ENCODE measurements at regions of chr17 and their contacts with region 1.

Region 1: DNA sequence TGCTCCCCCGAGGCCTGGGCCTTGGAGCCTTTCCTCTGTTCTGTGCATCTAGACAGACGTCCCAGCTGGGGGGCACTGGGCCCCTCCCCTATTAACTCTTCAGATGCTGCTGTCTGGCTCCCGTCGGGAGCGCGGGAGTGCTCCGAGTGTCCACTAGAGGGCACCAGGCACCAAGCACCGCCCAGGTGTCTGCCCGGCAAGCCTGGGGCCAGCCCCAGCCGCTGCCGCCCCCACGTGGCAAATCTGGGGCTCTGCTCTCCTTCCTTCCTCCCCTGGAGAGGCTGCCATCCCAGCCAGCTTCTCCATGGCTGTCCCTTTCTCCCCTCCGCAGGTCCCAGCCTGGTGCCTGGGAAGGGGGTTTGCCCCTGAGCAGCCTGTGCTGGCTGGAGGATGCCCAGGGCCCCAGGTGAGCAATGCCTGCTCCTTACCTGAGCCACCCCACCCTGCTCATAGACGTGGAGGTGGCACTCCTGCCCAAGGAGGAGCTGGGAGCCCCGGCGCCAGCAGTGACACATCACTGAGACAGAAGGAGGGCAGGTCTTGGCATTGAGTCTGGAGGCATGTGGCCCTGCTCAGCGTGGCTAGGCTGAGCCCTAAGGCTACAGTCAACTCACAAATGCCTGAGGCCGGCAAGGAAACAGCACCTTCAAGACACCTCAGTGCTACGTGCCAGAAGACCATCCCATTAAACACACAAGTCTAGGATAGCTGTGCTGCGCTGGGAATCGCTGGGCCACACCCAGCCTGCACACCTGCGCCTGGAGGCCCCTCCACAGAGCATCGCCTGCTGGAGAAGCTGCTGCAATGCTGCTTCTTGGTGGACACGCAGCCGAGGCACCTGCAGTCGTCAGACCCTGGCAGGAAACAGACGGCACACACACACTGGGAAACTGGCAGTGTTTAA is 19.7 kb downstream of the TMEM235 start:
- DNase-seq: peak; percentile 94
- CTCF ChIP-seq: peak; percentile 99

Region 2: GRCh38 chr17:78082988-78083387 is 168.2 kb before region 1 on chr17:
- CTCF ChIA-PET with region 1: interaction called, 70 read pairs
- POLR2A ChIA-PET with region 1: no interaction called
- DNase-seq: no peak
- CTCF ChIP-seq: no peak

Region 3: DNA sequence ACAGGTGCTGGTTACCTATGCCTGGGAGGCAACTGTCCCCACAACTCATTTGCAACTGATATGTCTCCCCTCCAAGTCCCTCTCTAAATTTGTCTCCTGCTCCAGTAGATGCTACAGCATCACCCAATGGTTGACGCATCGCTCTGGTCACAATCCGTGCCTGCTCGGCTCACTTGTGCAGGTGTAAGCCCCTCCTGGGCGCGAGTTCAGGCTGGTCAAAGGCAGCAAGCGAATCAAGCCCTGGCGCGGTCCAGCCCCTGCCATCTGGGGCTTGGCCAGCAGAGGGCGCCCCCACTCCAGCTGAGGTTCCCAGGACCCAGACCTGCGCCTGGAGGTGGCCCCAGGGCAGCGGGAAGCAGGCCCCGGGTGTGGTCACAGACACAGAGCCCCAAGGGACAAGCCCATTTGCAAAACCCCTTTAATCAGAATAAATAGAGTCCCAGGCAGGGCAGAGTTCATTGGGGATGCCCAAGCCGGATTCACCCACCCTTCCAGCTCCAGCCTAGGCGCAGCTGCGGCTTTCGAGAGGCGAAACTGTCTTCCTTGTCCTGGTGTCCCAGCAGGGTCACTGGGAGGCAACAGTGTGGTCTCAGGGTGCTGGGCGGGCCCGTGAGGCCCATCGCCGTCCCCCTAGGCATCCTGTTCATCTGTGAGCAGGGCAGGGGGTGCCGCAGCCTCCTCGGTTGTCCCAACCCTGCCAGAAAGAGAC is 138.5 kb before region 1 on chr17:
- CTCF ChIA-PET with region 1: interaction called, 24 read pairs
- POLR2A ChIA-PET with region 1: no interaction called
- DNase-seq: peak; percentile 89
- CTCF ChIP-seq: peak; percentile 97

Region 4: GRCh38 chr17:78197147-78197832 is 53.9 kb before region 1 on chr17:
- CTCF ChIA-PET with region 1: interaction called, 11 read pairs
- POLR2A ChIA-PET with region 1: no interaction called
- DNase-seq: no peak
- CTCF ChIP-seq: no peak

Region 5: DNA sequence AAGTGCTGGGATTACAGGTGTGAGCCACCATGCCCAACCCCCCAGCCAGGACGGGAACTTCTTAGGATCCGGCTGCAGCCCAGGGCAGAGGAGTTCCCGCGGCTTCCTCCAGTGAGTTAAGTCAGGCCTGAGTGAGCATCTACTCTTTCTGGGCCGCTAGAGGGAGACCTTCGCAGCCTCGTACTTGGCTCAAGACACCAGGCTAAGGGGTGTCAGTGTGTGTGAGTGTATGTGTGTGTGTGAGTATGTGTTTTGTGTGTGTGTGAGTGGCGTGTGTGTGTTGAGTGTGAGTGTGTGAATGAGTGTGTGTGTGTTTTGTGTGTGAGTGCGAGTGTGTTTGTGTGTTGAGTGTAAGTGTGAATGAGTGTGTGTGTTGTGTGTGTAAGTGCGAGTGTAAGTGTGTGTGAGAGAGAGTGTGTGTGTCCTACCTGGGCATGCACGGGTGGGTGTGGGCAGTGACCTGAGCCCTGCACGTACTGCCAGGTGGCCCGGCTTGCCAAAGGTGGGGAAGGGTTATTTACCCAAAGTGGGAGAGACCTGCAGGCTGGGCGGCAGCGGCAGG is 38.7 kb after region 1 on chr17:
- CTCF ChIA-PET with region 1: interaction called, 14 read pairs
- POLR2A ChIA-PET with region 1: no interaction called
- DNase-seq: peak; percentile 84
- CTCF ChIP-seq: peak; percentile 82

Region 6: GRCh38 chr17:78369791-78370381 is 118.7 kb after region 1 on chr17:
- CTCF ChIA-PET with region 1: no interaction called
- POLR2A ChIA-PET with region 1: no interaction called
- DNase-seq: no peak
- CTCF ChIP-seq: no peak

Region 7: DNA sequence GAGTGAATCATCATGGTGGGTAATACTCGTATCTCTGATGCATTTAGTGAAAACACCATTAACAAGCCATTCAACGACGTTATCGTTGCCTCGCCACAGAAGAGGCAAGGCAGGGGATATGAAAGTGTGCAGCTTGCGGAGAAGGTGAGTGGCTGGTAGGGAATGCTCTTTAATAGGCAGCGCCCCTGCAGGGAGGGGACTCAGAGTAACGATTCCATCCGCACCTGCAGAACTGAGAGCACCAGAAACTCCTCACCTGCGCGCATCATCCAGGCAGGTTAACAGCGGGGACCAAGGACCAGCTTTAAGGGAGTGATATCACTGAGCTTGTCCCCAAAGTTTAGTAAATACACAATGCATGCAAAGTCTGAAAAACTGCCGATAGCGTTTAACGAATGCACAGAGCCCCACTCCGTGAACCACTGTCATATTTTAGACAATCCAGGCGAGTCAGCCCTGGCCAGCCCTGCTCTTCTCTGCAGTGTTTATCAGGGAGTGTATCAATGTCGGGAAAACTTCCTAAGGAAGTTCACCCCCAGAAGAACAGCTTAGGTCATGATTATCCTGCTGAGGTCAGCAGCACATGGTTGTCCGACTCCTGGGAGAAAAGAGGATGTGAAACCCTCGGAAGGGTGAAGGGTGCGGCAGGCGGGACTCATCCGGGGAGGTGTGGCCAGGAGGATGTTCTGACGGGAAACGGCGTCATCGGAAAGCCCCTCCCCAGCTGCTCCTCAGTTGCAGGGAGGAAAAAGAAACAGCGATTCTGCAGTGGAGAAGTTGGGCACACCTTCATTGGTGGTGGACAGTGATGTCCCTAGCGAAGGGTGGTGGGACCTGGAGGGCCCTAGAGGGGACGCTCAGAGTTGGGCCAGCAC is 394.5 kb after region 1 on chr17:
- CTCF ChIA-PET with region 1: no interaction called
- POLR2A ChIA-PET with region 1: no interaction called
- DNase-seq: peak; percentile 87
- CTCF ChIP-seq: no peak

Region 8: GRCh38 chr17:78723001-78723796 is 472.1 kb after region 1 on chr17:
- CTCF ChIA-PET with region 1: no interaction called
- POLR2A ChIA-PET with region 1: no interaction called
- DNase-seq: no peak
- CTCF ChIP-seq: no peak